Caco-2 (cell line): ENCODE measurements at regions of chr6 and their contacts with region 1.

Region 1: GRCh38 chr6:21277601-21278374 is 315.8 kb upstream of the SOX4 start:
- DNase-seq: peak in 1 of 2 experiments; percentile 14
- H3K4me3 ChIP-seq: no peak overlapping the region
- H3K4me3 Mint-ChIP-seq: no peak overlapping the region
- H3K27ac Mint-ChIP-seq: no peak overlapping the region
- H3K4me1 ChIP-seq: peaks cover 46% of the 10 kb centered on the region
- H3K4me1 Mint-ChIP-seq: peaks cover 32% of the 10 kb centered on the region
- H3K27me3 ChIP-seq: no peaks in the 10 kb centered on the region
- H3K27me3 Mint-ChIP-seq: no peaks in the 10 kb centered on the region
- CTCF ChIP-seq: no peak

Region 2: DNA sequence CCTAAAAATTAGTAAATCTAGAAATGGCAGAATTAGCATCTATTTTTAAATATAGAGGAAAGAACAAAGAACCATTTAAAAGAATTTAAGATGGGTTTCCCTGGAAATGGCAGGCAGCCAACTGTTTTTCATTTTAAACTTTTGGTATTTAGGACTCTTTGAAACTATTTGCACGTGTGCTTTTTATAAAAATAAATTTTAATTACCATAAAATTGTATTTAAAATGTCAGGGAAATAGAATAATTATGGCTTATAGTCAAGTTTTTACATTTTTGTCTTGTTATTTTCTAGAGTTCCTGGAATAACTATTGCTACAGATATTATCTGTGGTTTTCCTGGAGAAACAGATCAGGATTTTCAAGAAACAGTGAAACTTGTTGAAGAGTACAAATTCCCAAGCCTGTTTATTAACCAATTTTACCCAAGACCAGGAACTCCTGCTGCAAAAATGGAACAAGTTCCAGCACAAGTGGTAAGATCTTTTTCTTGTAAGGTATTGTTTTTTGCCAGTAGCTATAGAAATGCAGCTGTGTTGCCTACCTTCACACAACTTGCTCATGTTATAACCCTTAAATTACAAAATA is 212.9 kb before region 1 on chr6:
- CTCF ChIA-PET with region 1: no interaction called
- POLR2A ChIA-PET with region 1: no interaction called
- intact Hi-C with region 1: no loop called
- DNase-seq: no peak
- H3K4me3 ChIP-seq: no peak overlapping the region
- H3K4me3 Mint-ChIP-seq: no peak overlapping the region
- H3K27ac Mint-ChIP-seq: no peak overlapping the region
- H3K4me1 ChIP-seq: no peaks in the 10 kb centered on the region
- H3K4me1 Mint-ChIP-seq: no peaks in the 10 kb centered on the region
- H3K27me3 ChIP-seq: no peaks in the 10 kb centered on the region
- H3K27me3 Mint-ChIP-seq: no peaks in the 10 kb centered on the region
- CTCF ChIP-seq: no peak

Region 3: GRCh38 chr6:21321076-21321475 is 43.3 kb after region 1 on chr6:
- CTCF ChIA-PET with region 1: no interaction called
- POLR2A ChIA-PET with region 1: no interaction called
- intact Hi-C with region 1: loop called (anchors 2 kb)
- DNase-seq: no peak
- H3K4me3 ChIP-seq: no peak overlapping the region
- H3K4me3 Mint-ChIP-seq: no peak overlapping the region
- H3K27ac Mint-ChIP-seq: no peak overlapping the region
- H3K4me1 ChIP-seq: no peaks in the 10 kb centered on the region
- H3K4me1 Mint-ChIP-seq: no peaks in the 10 kb centered on the region
- H3K27me3 ChIP-seq: no peaks in the 10 kb centered on the region
- H3K27me3 Mint-ChIP-seq: no peaks in the 10 kb centered on the region
- CTCF ChIP-seq: no peak